ENCODE measurements at regions of chr1 and their contacts with region 1.

Region 1: GRCh38 chr1:183915625-183916510 is 110.9 kb downstream of the RGL1 start:
- DNase-seq: peak; percentile 86
- H3K4me3 Mint-ChIP-seq: no peak overlapping the region
- H3K27ac Mint-ChIP-seq: peak overlapping the region; percentile 6
- H3K4me1 Mint-ChIP-seq: peaks cover 20% of the 10 kb centered on the region
- H3K27me3 Mint-ChIP-seq: no peaks in the 10 kb centered on the region

Region 2: DNA sequence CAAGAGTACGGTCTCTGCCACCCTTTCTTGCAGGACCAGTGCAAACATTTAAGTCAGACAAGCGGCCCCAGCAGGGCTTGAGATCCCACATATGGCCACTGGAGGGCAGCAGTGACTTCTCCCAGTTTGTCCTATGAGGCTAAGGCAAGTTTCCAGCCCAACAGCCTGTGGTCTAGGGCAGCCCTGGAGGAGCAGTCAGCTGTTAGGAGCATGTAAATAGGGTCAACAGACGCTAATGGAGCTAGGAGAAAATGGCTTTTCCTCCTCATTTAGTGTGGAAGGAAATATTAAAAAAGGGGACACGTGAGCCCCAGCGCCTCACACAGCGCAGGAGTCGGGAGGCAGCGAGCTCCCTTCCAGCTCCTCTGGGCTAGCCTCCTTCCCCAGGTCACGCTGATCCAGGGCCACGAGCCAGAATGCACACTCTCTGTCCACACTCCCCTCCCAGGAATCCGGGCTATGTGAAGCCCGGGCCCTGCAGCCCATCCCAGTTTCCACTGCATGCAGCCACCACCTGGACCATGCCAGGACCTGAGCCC is 634.2 kb before region 1 on chr1:
- CTCF ChIA-PET with region 1: interaction called, 4 read pairs
- intact Hi-C with region 1: loop called (anchors 1 kb)
- DNase-seq: peak; percentile 88
- H3K4me3 Mint-ChIP-seq: no peak overlapping the region
- H3K27ac Mint-ChIP-seq: no peak overlapping the region
- H3K4me1 Mint-ChIP-seq: no peaks in the 10 kb centered on the region
- H3K27me3 Mint-ChIP-seq: no peaks in the 10 kb centered on the region

Region 3: DNA sequence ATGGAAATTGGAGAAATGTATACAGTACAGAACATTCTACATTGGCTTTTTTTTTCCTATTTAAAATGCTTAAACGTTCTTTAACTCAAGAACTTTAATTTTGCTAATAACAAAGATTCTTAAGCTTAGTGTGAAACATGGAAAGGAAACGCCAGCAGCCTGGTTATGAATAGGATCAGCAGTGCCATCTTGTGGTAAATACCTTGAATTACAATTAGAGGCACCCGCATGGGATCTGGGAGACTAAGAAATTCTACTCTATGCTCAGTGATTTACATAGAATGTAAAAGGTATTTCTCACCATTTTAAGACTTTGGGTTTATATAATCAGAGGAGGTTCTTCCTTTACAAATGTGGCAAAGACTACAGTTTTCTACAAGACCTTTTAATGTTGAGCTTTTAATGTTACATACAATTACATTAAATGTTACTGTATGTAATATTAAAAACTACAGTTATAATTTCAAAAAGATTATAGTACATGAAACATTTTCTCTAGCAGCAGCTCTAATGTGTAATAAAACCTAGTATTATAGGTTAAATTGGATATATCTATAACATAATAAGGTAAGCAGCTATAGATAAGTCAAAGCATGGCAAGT is 230.7 kb before region 1 on chr1:
- CTCF ChIA-PET with region 1: interaction called, 39 read pairs
- intact Hi-C with region 1: loop called (anchors 1 kb)
- DNase-seq: peak; percentile 41
- H3K4me3 Mint-ChIP-seq: no peak overlapping the region
- H3K27ac Mint-ChIP-seq: no peak overlapping the region
- H3K4me1 Mint-ChIP-seq: peaks cover 8% of the 10 kb centered on the region
- H3K27me3 Mint-ChIP-seq: no peaks in the 10 kb centered on the region

Region 4: DNA sequence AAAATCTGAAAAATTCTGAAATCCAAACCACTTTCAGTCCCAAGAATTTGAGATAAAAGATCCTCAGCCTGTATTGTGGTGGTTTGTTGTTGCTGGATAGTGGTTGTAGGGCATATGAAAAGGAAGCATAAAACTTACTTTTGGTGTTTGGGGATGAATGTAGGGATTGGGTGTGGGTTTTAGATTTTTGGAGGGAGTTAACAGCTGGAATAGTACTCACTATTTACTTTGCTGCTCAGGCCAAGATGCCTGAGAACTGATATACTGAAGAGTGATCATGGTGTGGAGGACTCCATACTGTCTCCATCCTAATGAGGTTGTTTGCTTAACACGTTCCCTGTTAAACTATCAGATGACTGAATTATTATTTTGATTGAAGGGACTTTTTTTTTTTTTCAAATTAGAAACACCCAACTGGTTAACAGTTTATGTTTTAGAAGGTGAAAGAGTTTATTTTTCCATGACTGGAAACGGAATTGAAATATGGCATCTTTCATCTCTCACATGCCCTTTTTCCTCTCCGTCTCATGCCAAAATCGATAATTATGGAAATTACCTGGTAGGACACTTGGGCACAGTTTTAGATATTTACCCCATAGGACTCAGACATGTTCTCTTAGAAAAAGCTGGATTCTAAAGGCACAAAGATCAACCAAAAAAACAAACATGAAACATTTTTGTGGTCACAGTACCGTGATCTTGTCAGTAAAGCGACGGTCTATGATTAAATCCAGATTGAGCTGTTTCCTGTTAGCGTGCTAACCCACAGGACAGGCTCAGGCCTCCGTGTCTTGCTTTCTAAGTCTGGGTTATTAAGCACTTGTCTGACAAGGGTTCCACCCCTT is 73.7 kb before region 1 on chr1:
- CTCF ChIA-PET with region 1: no interaction called
- intact Hi-C with region 1: loop called (anchors 1 kb)
- DNase-seq: peak; percentile 58
- H3K4me3 Mint-ChIP-seq: peak overlapping the region; percentile 56
- H3K27ac Mint-ChIP-seq: peak overlapping the region; percentile 88
- H3K4me1 Mint-ChIP-seq: peaks cover 28% of the 10 kb centered on the region
- H3K27me3 Mint-ChIP-seq: no peaks in the 10 kb centered on the region

Region 5: DNA sequence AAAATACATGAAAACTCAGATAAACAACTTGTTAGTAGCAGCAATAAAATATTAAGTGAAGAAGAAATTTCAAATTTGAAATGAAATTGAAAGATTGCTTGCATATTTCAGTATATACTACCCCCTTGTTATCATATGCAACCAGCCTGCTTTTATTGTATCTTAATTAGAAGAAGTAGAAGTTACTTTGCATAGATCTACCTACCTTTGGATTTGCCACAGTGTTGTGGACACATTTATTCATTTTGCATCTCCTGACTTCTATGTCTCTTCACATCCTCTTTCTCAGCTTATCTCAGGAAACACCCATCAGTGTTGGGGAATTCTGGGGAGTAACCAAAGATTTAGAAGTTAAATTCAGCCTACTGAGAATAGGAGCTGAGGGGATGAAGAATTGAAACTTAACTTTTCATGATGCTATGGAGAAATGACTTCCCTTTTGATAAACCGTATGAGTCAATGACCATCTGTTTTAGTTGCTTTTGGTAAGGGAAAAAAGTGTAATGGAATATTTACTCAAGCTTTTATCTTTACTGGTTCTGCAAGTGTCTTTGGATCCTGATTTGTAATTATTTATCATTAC is 14.0 kb before region 1 on chr1:
- CTCF ChIA-PET with region 1: interaction called, 14 read pairs
- intact Hi-C with region 1: loop called (anchors 1 kb)
- DNase-seq: no peak
- H3K4me3 Mint-ChIP-seq: no peak overlapping the region
- H3K27ac Mint-ChIP-seq: peak overlapping the region; percentile 33
- H3K4me1 Mint-ChIP-seq: peaks cover 20% of the 10 kb centered on the region
- H3K27me3 Mint-ChIP-seq: no peaks in the 10 kb centered on the region

Region 6: DNA sequence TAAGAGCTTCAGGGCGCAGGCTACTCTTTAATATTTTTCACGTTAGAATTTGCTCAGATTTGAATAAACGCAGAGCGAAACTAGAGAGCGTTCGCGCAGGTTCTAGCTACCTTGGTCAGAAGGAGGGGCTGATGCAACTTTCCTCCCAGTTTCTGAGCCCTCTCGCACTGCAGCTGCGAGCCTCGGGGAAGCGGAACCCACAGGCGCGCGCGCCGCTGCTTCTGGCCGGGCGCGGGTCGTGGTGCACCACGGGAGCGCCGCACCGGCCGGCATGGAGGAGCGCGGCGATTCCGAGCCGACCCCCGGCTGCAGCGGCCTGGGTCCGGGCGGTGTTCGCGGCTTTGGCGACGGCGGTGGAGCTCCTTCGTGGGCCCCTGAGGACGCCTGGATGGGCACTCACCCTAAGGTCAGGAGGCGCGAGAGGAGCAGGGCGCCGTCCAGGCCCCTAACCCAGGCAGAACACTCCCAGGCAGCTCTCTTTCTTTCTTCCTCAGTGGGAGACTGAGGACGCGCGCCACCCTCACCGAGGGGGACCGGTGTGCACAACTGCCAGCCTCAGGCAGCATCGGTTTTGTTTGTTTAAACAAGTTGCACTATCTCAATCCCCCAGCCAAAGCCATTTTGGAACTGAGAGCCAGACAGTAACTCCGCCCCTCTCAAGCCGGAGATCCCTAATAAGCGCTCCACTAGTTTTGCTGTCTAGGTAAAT is 135.8 kb after region 1 on chr1 and contains the start of gene TSEN15:
- CTCF ChIA-PET with region 1: no interaction called
- intact Hi-C with region 1: loop called (anchors 5 kb)
- DNase-seq: peak; percentile 84
- H3K4me3 Mint-ChIP-seq: peak within 1 kb of the TSS; percentile 96
- H3K27ac Mint-ChIP-seq: peak within 1 kb of the TSS; percentile 96
- H3K4me1 Mint-ChIP-seq: peaks cover 34% of the 10 kb centered on the region
- H3K27me3 Mint-ChIP-seq: peaks cover 5% of the 10 kb centered on the region
- total RNA-seq, gene TSEN15: 52.6 to 57.6 TPM

Region 7: GRCh38 chr1:184160236-184160635 is 244.4 kb after region 1 on chr1:
- CTCF ChIA-PET with region 1: no interaction called
- intact Hi-C with region 1: no loop called
- DNase-seq: peak; percentile 70
- H3K4me3 Mint-ChIP-seq: no peak overlapping the region
- H3K27ac Mint-ChIP-seq: no peak overlapping the region
- H3K4me1 Mint-ChIP-seq: no peaks in the 10 kb centered on the region
- H3K27me3 Mint-ChIP-seq: peaks cover 7% of the 10 kb centered on the region

Measured in activated naive CD4-positive, alpha-beta T cell treated with anti-CD3 and anti-CD28 coated beads for 36 hours (primary cell).